Caco-2 (cell line): ENCODE measurements at regions of chr10 and their contacts with region 1.

Region 1: GRCh38 chr10:112880633-112881530 is 69.2 kb upstream of the TCF7L2 start:
- DNase-seq: no peak
- H3K4me3 ChIP-seq: no peak overlapping the region
- H3K4me3 Mint-ChIP-seq: no peak overlapping the region
- H3K27ac Mint-ChIP-seq: no peak overlapping the region
- H3K4me1 ChIP-seq: peaks cover 14% of the 10 kb centered on the region; the same call in 1 of the 2 replicates
- H3K4me1 Mint-ChIP-seq: peaks cover 13% of the 10 kb centered on the region
- H3K27me3 ChIP-seq: no peaks in the 10 kb centered on the region
- H3K27me3 Mint-ChIP-seq: no peaks in the 10 kb centered on the region
- CTCF ChIP-seq: no peak

Region 2: DNA sequence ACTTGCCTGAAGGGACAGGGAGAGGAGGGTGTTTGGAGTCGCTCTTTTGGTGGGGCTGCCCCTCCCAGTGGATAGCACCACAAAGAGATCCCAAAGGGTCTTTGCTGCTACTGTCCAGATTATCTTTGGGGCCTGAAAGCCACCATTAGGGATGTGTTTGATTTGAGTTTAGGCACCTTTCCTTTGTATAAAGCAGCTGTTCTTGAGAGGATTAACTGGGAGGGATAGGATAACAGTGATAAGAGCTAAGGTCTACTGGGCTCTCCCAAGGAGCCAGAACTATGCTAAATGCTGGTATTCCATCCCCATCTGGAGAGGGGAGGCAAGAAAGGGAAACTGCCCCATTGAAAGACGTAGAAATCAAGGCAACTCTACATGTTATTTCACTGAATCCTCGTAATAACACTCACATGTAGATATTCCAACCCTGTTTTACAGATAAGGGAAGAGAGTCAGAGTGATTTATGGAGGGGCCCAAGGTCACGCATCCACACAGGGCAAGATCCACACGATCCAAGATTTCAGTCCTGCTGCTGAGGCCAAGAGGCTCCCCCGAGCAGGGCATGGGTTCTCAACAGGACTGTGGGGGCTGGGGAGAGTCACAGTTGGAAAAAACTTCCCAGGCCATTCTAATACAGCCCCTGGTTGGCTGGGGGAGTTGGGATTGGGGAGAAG is 58.1 kb after region 1 on chr10:
- CTCF ChIA-PET with region 1: no interaction called
- POLR2A ChIA-PET with region 1: interaction called, 14 read pairs
- intact Hi-C with region 1: no loop called
- DNase-seq: peak in 1 of 2 experiments; percentile 54
- H3K4me3 ChIP-seq: no peak overlapping the region
- H3K4me3 Mint-ChIP-seq: no peak overlapping the region
- H3K27ac Mint-ChIP-seq: no peak overlapping the region
- H3K4me1 ChIP-seq: peaks cover 14% of the 10 kb centered on the region
- H3K4me1 Mint-ChIP-seq: peaks cover 12% of the 10 kb centered on the region
- H3K27me3 ChIP-seq: no peaks in the 10 kb centered on the region
- H3K27me3 Mint-ChIP-seq: no peaks in the 10 kb centered on the region
- CTCF ChIP-seq: no peak

Region 3: DNA sequence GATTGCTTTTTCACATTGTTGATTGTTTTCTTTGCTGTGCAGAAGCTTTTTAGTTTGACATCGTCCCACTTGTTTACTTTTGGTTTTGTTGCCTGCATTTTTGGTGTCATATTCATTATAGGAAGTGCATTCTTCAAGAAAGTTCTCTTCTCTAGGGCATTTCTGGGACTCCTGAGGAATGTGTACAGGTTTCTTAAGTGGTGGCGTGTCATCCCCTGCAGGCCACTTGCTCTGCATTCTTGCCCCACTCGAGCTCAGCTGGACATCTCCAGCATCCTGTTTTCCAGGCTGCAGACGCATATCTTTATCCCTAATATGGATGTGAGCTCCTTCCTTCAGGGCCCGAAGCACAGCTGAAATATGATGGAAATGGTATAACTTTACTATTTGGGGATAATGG is 416.3 kb after region 1 on chr10:
- CTCF ChIA-PET with region 1: no interaction called
- POLR2A ChIA-PET with region 1: no interaction called
- intact Hi-C with region 1: no loop called
- DNase-seq: peak in 1 of 2 experiments; percentile 33
- H3K4me3 ChIP-seq: no peak overlapping the region
- H3K4me3 Mint-ChIP-seq: no peak overlapping the region
- H3K27ac Mint-ChIP-seq: peak overlapping the region; percentile 26
- H3K4me1 ChIP-seq: peaks cover 3% of the 10 kb centered on the region; the same call in 1 of the 2 replicates
- H3K4me1 Mint-ChIP-seq: peaks cover 13% of the 10 kb centered on the region
- H3K27me3 ChIP-seq: no peaks in the 10 kb centered on the region
- H3K27me3 Mint-ChIP-seq: no peaks in the 10 kb centered on the region
- CTCF ChIP-seq: no peak